ENCODE measurements at regions of chr14 and their contacts with region 1.

Region 1: GRCh38 chr14:64012720-64013119 is 159.9 kb downstream of the SYNE2 start:
- DNase-seq: no peak
- H3K4me3 ChIP-seq: no peak overlapping the region
- CTCF ChIP-seq: no peak

Region 2: DNA sequence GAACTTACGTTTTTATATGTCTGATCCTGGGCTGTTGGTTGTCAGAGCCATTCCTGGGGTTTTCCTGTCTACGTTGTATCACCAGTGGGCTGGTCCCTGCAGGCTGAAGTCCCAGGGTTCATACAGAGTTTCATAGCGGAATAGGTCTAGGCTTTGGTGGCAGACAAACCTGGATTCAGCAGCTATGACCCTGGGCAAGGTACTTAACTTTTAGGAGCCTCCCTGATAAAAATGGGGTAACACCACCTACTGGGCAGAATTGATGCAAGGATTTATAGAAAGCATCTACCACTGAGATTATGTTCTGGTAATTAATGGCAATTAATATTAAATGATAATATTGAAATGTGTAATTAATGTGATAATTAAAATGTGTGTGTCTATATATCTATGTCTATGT is 18.7 kb before region 1 on chr14:
- CTCF ChIA-PET with region 1: interaction called, 24 read pairs
- POLR2A ChIA-PET with region 1: no interaction called
- DNase-seq: no peak
- H3K4me3 ChIP-seq: no peak overlapping the region
- CTCF ChIP-seq: no peak

Region 3: GRCh38 chr14:64026600-64026999 is 13.9 kb after region 1 on chr14:
- CTCF ChIA-PET with region 1: interaction called, 47 read pairs
- POLR2A ChIA-PET with region 1: no interaction called
- DNase-seq: no peak
- H3K4me3 ChIP-seq: no peak overlapping the region
- CTCF ChIP-seq: no peak

Region 4: DNA sequence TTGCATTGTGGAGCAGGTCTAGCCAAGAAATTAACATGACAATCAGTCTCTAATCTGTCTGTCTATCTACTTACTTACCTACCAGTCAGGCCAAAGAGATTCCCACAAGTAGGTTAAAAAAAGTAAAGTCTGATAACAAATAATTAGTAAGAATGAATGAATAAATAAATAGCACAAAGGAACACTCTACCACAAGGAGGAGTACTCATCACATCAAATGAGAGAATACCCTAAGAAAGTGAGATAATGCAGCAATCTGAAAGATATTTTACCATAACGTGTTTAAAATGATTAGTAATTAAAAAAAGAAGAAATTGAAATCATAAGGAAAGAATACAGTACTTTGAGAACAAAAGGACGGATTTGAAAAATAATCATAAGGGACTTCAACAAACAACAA is 27.3 kb after region 1 on chr14:
- CTCF ChIA-PET with region 1: interaction called, 10 read pairs
- POLR2A ChIA-PET with region 1: no interaction called
- DNase-seq: no peak
- H3K4me3 ChIP-seq: no peak overlapping the region
- CTCF ChIP-seq: peak; percentile 5

Measured in AG04449 (cell line).